ENCODE measurements at regions of chr6 and their contacts with region 1.

Region 1: GRCh38 chr6:116662202-116662601 is 6.4 kb downstream of the ZUP1 start:
- DNase-seq: no peak
- ATAC-seq: peak; percentile 25
- H3K4me3 ChIP-seq: no peak overlapping the region; the same call in 1 of the 2 replicates
- H3K27ac ChIP-seq: no peak overlapping the region
- H3K4me1 ChIP-seq: no peaks in the 10 kb centered on the region; the same call in 1 of the 2 replicates
- H3K27me3 ChIP-seq: no peaks in the 10 kb centered on the region
- CTCF ChIP-seq: no peak
- EP300 ChIP-seq: no peak
- POLR2A ChIP-seq: no peak
- RAD21 ChIP-seq: no peak

Region 2: DNA sequence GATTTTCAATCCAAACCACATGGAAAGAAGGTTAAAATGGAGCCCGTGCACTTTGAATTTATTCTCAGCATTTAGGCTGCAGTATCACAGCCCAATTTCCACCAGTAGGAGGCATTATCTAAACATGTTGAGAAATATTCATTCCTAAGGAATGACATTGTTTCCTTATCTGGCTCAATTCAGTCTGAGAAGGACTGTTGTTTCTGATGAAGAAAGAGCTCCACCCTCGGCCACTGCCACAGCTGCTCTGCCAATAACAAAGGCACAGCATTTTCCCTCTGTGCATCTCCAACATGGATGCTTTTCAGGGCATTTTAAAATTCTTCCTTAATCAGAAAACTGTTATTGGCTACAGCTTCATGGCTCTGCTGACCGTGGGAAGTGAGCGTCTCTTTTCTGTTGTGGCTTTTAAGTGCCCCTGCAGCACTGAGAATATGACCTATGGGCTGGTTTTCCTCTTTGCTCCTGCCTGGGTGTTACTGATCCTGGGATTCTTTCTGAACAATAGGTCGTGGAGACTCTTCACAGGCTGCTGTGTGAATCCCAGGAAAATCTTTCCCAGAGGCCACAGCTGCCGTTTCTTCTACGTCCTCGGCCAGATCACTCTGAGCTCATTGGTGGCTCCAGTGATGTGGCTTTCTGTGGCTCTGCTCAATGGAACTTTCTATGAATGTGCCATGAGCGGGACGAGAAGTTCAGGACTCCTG is 150.6 kb before region 1 on chr6 and contains the start of gene CALHM5:
- CTCF ChIA-PET with region 1: no interaction called
- POLR2A ChIA-PET with region 1: no interaction called
- RAD21 ChIA-PET with region 1: no interaction called
- SMC1A ChIA-PET with region 1: no interaction called
- in situ Hi-C with region 1: no loop called
- intact Hi-C with region 1: no loop called
- DNase-seq: no peak
- ATAC-seq: no peak
- H3K4me3 ChIP-seq: no peak within 1 kb of the TSS
- H3K27ac ChIP-seq: no peak within 1 kb of the TSS
- H3K4me1 ChIP-seq: peaks cover 9% of the 10 kb centered on the region
- H3K27me3 ChIP-seq: no peaks in the 10 kb centered on the region; a peak in 1 of 4 replicates
- CTCF ChIP-seq: peak in 1 of 3 experiments; percentile 24; a peak in 1 of 6 replicates
- EP300 ChIP-seq: no peak
- POLR2A ChIP-seq: no peak
- RAD21 ChIP-seq: 0 out of 2 replicates have a peak, but pooled peaks have one; percentile 2
- polyA plus RNA-seq, gene CALHM5: not detected

Region 3: GRCh38 chr6:116648156-116648555 is 14.0 kb before region 1 on chr6:
- CTCF ChIA-PET with region 1: interaction called, 11 read pairs
- POLR2A ChIA-PET with region 1: no interaction called
- RAD21 ChIA-PET with region 1: interaction called, 3 read pairs
- SMC1A ChIA-PET with region 1: interaction called, 8 read pairs
- in situ Hi-C with region 1: no loop called
- intact Hi-C with region 1: no loop called
- DNase-seq: no peak
- ATAC-seq: no peak
- H3K4me3 ChIP-seq: no peak overlapping the region
- H3K27ac ChIP-seq: no peak overlapping the region
- H3K4me1 ChIP-seq: no peaks in the 10 kb centered on the region
- H3K27me3 ChIP-seq: no peaks in the 10 kb centered on the region
- CTCF ChIP-seq: no peak
- EP300 ChIP-seq: no peak
- POLR2A ChIP-seq: no peak
- RAD21 ChIP-seq: no peak

Measured in GM12878 (cell line).